B cell (primary cell): ENCODE measurements at regions of chr18 and their contacts with region 1.

Region 1: DNA sequence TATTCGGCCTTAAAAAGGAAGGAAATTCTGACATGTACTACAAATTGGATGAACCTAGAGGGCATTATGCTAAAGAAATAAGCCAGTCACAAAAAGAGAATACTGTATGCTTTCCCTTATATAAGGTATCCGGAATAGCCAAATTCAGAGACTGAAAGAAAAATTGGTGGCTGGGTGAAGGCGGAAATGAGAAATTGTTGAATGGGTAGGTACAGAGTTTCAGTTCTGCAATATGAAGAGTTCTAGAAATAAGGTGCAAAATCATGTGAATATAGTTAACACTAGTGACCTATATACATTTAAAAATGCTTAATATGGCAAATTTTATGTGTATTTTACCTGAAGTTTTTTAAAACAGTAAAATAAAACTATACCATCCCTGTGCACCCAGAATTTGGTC is 43.1 kb downstream of the RMP24 start:
- DNase-seq: peak; percentile 71
- ATAC-seq: peak; percentile 76
- H3K4me3 ChIP-seq: no peak overlapping the region
- H3K4me3 Mint-ChIP-seq: peak overlapping the region; percentile 3
- H3K27ac ChIP-seq: no peak overlapping the region
- H3K27ac Mint-ChIP-seq: peak overlapping the region; percentile 12
- H3K4me1 ChIP-seq: peaks cover 13 to 19% of the 10 kb centered on the region in 2 donors
- H3K4me1 Mint-ChIP-seq: peaks cover 24% of the 10 kb centered on the region
- H3K27me3 ChIP-seq: no peaks in the 10 kb centered on the region
- H3K27me3 Mint-ChIP-seq: no peaks in the 10 kb centered on the region
- CTCF ChIP-seq: no peak

Region 2: DNA sequence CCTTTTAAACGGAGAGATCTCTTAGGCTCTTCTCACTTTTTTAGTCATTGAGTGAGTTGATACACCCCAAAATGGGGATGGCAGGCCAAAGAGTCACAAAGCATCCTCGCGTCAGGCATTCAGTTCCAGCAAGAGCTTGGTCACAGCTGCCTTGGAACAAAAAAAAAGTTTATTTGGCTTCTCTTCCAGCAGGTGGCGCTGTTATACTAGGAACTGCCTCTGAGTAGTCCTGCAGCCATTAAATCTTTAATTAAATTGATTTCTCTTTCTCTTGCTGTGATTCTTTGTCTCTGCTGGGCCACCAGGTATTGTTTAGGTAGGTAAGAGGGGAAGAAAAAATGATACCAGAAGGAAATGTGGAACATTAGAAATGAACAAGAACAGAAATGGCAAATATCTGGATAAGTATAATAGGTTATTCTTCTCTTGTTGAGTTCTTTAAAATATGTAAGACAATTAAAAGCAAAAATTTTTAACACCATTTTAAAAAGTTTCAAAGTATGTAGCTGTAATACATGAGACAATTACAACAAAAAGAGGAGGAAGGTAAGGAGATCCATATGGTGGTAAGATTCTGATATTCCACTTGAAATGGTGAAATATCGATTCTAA is 259.0 kb before region 1 on chr18:
- CTCF ChIA-PET with region 1: interaction called, 10 read pairs
- POLR2A ChIA-PET with region 1: no interaction called
- intact Hi-C with region 1: loop called (anchors 1 kb)
- DNase-seq: peak; percentile 75
- ATAC-seq: peak; percentile 63
- H3K4me3 ChIP-seq: no peak overlapping the region
- H3K4me3 Mint-ChIP-seq: no peak overlapping the region
- H3K27ac ChIP-seq: no peak overlapping the region
- H3K27ac Mint-ChIP-seq: no peak overlapping the region
- H3K4me1 ChIP-seq: no peaks in the 10 kb centered on the region
- H3K4me1 Mint-ChIP-seq: peaks cover 2% of the 10 kb centered on the region
- H3K27me3 ChIP-seq: peaks cover 0 to 11% (median 6%) of the 10 kb centered on the region in 4 experiments
- H3K27me3 Mint-ChIP-seq: peaks cover 27% of the 10 kb centered on the region
- CTCF ChIP-seq: peak; percentile 99

Region 3: DNA sequence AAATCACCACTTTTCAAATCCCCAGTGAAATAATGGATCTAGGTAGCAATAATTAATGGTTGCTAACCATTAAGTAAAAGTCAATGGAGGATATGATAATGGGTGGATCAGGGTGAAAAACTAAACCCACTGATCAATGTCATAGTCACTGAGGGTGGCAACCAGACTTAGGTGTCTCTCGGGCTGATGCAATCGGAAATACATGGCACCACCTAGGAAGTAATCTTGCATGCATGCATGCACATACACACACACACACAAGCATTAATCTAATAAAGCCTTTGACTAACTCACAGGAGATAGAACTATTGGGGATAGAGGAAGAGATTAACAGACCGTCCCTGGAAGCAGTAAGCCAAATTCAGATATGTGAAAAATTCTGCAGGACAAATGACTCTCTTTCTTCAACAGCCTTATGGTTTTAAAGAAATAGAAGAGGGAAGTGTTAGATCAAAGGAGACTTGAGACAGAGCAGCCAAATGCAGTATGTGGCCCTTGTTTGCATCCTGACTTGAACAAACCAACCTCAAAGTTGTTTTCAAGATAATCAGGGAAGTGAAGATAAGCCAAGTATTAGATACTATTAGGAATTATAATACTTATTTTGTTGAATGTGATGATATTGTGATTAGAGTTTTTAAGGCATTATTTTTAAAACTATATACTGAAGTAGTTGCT is 229.1 kb before region 1 on chr18:
- CTCF ChIA-PET with region 1: no interaction called
- POLR2A ChIA-PET with region 1: no interaction called
- intact Hi-C with region 1: no loop called
- DNase-seq: peak; percentile 60
- ATAC-seq: peak; percentile 88
- H3K4me3 ChIP-seq: peak overlapping the region in 1 of 5 experiments; percentile 18
- H3K4me3 Mint-ChIP-seq: peak overlapping the region; percentile 71
- H3K27ac ChIP-seq: no peak overlapping the region
- H3K27ac Mint-ChIP-seq: peak overlapping the region; percentile 64
- H3K4me1 ChIP-seq: peaks cover 15 to 16% of the 10 kb centered on the region in 2 donors
- H3K4me1 Mint-ChIP-seq: peaks cover 19% of the 10 kb centered on the region
- H3K27me3 ChIP-seq: peaks cover 0 to 12% (median 4%) of the 10 kb centered on the region in 4 experiments
- H3K27me3 Mint-ChIP-seq: peaks cover 5% of the 10 kb centered on the region
- CTCF ChIP-seq: no peak

Region 4: GRCh38 chr18:36028859-36029258 is 13.2 kb after region 1 on chr18:
- CTCF ChIA-PET with region 1: interaction called, 12 read pairs
- POLR2A ChIA-PET with region 1: interaction called, 3 read pairs
- intact Hi-C with region 1: no loop called
- DNase-seq: no peak
- ATAC-seq: no peak
- H3K4me3 ChIP-seq: no peak overlapping the region
- H3K4me3 Mint-ChIP-seq: no peak overlapping the region
- H3K27ac ChIP-seq: no peak overlapping the region
- H3K27ac Mint-ChIP-seq: no peak overlapping the region
- H3K4me1 ChIP-seq: peaks cover 22 to 34% of the 10 kb centered on the region in 2 donors
- H3K4me1 Mint-ChIP-seq: peaks cover 35% of the 10 kb centered on the region
- H3K27me3 ChIP-seq: no peaks in the 10 kb centered on the region
- H3K27me3 Mint-ChIP-seq: no peaks in the 10 kb centered on the region
- CTCF ChIP-seq: no peak

Region 5: GRCh38 chr18:36095936-36096519 is 80.4 kb after region 1 on chr18:
- CTCF ChIA-PET with region 1: interaction called, 14 read pairs
- POLR2A ChIA-PET with region 1: no interaction called
- intact Hi-C with region 1: loop called (anchors 1 kb)
- DNase-seq: peak; percentile 65
- ATAC-seq: peak; percentile 43
- H3K4me3 ChIP-seq: no peak overlapping the region
- H3K4me3 Mint-ChIP-seq: no peak overlapping the region
- H3K27ac ChIP-seq: no peak overlapping the region
- H3K27ac Mint-ChIP-seq: no peak overlapping the region
- H3K4me1 ChIP-seq: no peaks in the 10 kb centered on the region
- H3K4me1 Mint-ChIP-seq: no peaks in the 10 kb centered on the region
- H3K27me3 ChIP-seq: no peaks in the 10 kb centered on the region
- H3K27me3 Mint-ChIP-seq: peaks cover 7% of the 10 kb centered on the region
- CTCF ChIP-seq: peak; percentile 80

Region 6: DNA sequence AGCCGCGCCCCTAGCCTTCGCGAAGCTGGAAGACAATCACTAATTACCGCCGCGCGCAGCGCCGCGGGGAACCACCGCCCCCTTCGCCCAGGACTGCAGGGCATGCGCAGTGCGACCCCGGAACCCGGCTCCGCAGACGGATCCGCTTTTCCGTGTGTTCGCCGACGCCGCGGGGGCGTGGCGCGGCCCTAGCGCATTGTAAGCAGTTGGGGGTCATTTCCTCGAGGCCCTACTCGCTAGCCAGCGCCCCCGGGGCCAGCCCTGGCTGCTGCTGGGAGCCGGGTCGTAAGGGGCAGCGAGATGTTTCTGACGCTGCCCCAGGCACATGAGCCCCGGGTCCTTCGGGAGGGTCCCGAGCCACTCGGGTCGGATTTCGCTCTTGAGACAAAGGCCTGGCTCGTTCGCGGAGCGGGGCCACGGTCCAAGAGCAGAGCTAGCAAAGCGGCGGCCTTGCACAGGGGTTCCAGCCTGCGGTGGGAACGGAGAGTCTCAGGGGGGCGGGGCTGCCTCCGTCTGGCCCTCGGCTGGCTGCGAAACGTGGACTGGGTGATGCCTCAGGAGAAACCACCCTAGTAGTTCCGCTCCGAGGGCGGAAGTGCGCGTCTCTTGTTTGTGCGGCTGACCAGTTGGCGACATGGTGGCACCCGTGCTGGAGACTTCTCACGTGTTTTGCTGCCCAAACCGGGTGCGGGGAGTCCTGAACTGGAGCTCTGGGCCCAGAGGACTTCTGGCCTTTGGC is 113.8 kb after region 1 on chr18 and contains the starts of genes ELP2 and SLC39A6:
- CTCF ChIA-PET with region 1: interaction called, 6 read pairs
- POLR2A ChIA-PET with region 1: interaction called, 3 read pairs
- intact Hi-C with region 1: loop called (anchors 1 kb)
- DNase-seq: peak; percentile 97
- ATAC-seq: peak; percentile 85
- H3K4me3 ChIP-seq: peak within 1 kb of the TSS; percentile 82 to 98 (median 90)
- H3K4me3 Mint-ChIP-seq: peak within 1 kb of the TSS; percentile 94
- H3K27ac ChIP-seq: peak within 1 kb of the TSS; percentile 97 to 99
- H3K27ac Mint-ChIP-seq: peak within 1 kb of the TSS; percentile 98
- H3K4me1 ChIP-seq: peaks cover 34 to 36% of the 10 kb centered on the region in 2 donors
- H3K4me1 Mint-ChIP-seq: peaks cover 53% of the 10 kb centered on the region
- H3K27me3 ChIP-seq: no peaks in the 10 kb centered on the region
- H3K27me3 Mint-ChIP-seq: no peaks in the 10 kb centered on the region
- CTCF ChIP-seq: no peak
- total RNA-seq, gene ELP2: 137 and 169 TPM in 2 replicates
- total RNA-seq, gene SLC39A6: 18.2 and 19.5 TPM in 2 replicates

Region 7: GRCh38 chr18:36321658-36322407 is 306.2 kb after region 1 on chr18:
- CTCF ChIA-PET with region 1: no interaction called
- POLR2A ChIA-PET with region 1: no interaction called
- intact Hi-C with region 1: no loop called
- DNase-seq: no peak
- ATAC-seq: no peak
- H3K4me3 ChIP-seq: no peak overlapping the region
- H3K4me3 Mint-ChIP-seq: no peak overlapping the region
- H3K27ac ChIP-seq: no peak overlapping the region
- H3K27ac Mint-ChIP-seq: no peak overlapping the region
- H3K4me1 ChIP-seq: no peaks in the 10 kb centered on the region
- H3K4me1 Mint-ChIP-seq: no peaks in the 10 kb centered on the region
- H3K27me3 ChIP-seq: peaks cover 0 to 18% (median 0%) of the 10 kb centered on the region in 4 experiments
- H3K27me3 Mint-ChIP-seq: peaks cover 35% of the 10 kb centered on the region
- CTCF ChIP-seq: no peak

Region 8: GRCh38 chr18:36809590-36810381 is 794.2 kb after region 1 on chr18:
- CTCF ChIA-PET with region 1: interaction called, 3 read pairs
- POLR2A ChIA-PET with region 1: no interaction called
- intact Hi-C with region 1: loop called (anchors 2 kb)
- DNase-seq: peak; percentile 70
- ATAC-seq: peak; percentile 91
- H3K4me3 ChIP-seq: no peak overlapping the region
- H3K4me3 Mint-ChIP-seq: no peak overlapping the region
- H3K27ac ChIP-seq: no peak overlapping the region
- H3K27ac Mint-ChIP-seq: no peak overlapping the region
- H3K4me1 ChIP-seq: peaks cover 0 to 3% of the 10 kb centered on the region in 2 donors
- H3K4me1 Mint-ChIP-seq: peaks cover 2% of the 10 kb centered on the region
- H3K27me3 ChIP-seq: no peaks in the 10 kb centered on the region
- H3K27me3 Mint-ChIP-seq: no peaks in the 10 kb centered on the region
- CTCF ChIP-seq: peak; percentile 94